Motor neuron (in vitro differentiated cells): ENCODE measurements at regions of chr2 and their contacts with region 1.

Region 1: GRCh38 chr2:179376881-179377280 is 112.2 kb upstream of the SESTD1 start:
- ATAC-seq: no peak
- H3K4me3 ChIP-seq: no peak overlapping the region
- H3K27ac ChIP-seq: no peak overlapping the region
- H3K4me1 ChIP-seq: no peaks in the 10 kb centered on the region

Region 2: DNA sequence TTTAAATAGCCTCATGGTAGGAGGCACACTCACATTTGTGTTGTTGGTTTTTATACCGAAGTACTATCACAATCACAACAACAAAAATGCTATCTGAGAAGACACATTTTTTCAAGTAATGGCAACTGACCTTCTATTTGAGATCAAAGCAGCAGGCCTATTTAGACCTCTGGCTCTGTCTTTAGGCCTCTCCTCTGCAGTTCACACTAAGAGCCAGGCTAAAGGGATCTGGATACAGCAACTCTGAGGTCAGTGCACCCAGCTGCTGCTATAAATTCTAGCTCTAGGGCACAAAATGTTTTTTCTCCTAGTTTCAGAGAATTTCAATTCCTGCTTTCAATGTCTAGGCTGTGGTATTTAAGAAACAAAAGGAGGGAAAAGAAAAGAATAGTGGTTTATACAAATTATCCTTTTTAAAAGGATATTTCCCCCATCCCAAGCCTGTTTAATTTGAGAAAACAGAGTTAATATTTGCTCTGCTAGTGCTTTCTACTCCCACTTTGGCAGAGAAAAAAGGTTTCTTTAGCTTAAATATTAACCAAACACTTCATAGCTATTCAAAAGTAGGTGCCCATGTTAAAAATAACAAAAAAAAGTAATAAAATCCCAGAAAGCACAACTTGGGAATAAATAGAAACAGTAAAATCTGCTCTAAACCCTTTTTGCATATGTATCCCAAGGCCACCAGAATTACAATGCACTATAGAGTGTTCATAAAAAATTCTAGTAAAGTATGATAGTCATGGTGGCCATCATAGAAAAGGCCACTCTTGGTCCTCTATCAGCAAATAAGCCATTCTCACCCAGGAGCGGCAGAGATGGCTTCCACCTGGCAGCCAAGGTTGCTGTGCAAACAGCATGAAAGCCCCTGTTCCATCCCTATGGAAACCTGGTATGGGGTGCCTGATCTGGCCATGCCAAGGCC is 181.4 kb after region 1 on chr2:
- in situ Hi-C with region 1: no loop called
- ATAC-seq: peak; percentile 35 to 84 (median 60)
- H3K4me3 ChIP-seq: no peak overlapping the region
- H3K27ac ChIP-seq: no peak overlapping the region
- H3K4me1 ChIP-seq: peaks cover 6% of the 10 kb centered on the region in 2 donors

Region 3: DNA sequence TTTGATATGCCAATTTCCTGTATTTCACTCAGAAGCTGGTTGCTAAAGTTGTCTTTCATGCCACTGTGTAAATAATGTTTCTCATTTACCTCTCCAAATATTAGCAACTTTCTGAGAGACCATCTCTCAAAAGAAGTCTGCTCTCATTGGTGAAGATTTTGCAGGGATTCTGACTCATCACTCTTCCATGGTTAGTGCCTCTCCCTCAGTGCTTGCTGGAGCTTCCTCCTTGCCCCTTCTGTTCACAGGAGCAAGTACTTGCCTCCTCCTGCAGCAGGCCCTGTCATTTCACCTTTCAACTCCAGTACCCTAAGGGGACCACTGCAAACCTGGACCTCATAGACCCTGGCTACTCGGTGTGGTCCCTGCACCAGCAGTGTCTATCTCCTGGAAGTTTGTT is 315.7 kb after region 1 on chr2:
- in situ Hi-C with region 1: no loop called
- ATAC-seq: peak in 2 of 8 experiments; percentile 57 to 72
- H3K4me3 ChIP-seq: no peak overlapping the region
- H3K27ac ChIP-seq: no peak overlapping the region
- H3K4me1 ChIP-seq: no peaks in the 10 kb centered on the region

Region 4: GRCh38 chr2:179936654-179937053 is 559.8 kb after region 1 on chr2:
- in situ Hi-C with region 1: loop called in 1 of 9 experiments (anchors 25 kb)
- ATAC-seq: peak in 1 of 8 experiments; percentile 47
- H3K4me3 ChIP-seq: no peak overlapping the region
- H3K27ac ChIP-seq: no peak overlapping the region
- H3K4me1 ChIP-seq: no peaks in the 10 kb centered on the region